Head of caudate nucleus (tissue), 42 donors: ENCODE measurements at regions of chr20 and their contacts with region 1.

Region 1: GRCh38 chr20:18566892-18567742 is at the start of gene SMIM26:
- DNase-seq: peak; percentile 83 to 97 (median 92)

Region 2: DNA sequence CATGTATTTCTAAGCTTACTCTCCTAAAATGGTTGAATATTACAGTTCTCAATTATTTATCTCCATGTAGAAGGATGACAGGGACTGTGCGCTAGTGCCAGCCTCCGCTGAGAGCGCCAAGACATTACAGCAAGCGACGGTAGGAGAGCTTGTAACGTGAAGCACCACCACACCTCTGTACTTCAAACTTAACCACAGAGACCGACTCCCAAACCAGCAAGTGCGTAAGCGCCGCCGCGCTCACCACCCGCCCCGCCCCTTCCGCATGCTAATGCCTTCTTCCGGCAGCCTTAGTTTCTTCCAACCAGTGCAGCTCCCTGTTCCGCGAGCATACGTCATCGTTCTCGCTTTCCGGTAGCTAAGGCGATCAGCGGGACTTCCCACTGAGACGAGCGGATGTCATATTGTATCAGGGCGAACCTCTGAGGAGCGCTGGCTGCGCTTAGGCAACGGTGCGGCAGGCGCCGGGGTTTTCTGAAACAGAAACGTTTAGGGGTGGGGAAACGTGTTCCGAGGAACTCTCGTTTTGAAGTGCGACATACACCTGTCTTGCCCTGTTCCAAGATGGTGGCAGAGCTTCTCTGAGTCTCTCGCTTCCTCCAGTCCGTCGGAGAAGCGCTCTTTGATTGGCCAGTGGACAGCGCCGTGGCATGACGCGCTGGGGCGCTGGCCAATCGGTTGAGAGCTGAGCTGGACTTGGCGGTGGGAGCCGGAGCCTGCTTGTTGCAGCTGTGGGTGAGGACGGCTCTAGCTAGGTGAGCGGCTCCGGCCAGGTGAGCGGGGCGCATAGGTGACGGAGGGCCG is 59.7 kb before region 1 on chr20 and contains the start of gene SEC23B:
- intact Hi-C with region 1: loop called (anchors 5 kb)
- DNase-seq: peak; percentile 94 to 99 (median 98)